PC-9 (cell line): ENCODE measurements at regions of chr17 and their contacts with region 1.

Region 1: DNA sequence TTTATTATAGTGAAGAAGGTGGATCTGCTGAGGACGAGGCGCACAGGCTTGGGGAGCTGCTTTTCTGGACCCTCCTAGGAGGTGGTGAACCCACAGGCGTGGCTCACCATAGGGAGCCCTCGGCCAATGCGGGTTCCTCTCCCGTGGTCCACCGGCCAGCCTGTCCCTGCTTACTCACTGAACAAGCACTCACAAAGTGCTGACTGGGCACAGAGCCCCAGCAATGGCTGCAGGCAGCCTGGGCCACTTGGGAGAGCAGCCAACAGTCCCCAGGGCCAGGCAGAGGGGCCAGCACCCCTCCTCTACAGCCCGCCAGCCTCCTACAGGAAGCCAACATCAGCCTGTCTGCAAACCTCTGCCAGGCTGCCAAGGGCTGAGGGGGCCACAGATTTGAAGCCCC is 19.1 kb upstream of the NCBP3 start:
- DNase-seq: no peak
- H3K4me3 ChIP-seq: no peak overlapping the region
- H3K27ac ChIP-seq: no peak overlapping the region
- H3K4me1 ChIP-seq: no peaks in the 10 kb centered on the region
- H3K27me3 ChIP-seq: no peaks in the 10 kb centered on the region
- CTCF ChIP-seq: no peak

Region 2: DNA sequence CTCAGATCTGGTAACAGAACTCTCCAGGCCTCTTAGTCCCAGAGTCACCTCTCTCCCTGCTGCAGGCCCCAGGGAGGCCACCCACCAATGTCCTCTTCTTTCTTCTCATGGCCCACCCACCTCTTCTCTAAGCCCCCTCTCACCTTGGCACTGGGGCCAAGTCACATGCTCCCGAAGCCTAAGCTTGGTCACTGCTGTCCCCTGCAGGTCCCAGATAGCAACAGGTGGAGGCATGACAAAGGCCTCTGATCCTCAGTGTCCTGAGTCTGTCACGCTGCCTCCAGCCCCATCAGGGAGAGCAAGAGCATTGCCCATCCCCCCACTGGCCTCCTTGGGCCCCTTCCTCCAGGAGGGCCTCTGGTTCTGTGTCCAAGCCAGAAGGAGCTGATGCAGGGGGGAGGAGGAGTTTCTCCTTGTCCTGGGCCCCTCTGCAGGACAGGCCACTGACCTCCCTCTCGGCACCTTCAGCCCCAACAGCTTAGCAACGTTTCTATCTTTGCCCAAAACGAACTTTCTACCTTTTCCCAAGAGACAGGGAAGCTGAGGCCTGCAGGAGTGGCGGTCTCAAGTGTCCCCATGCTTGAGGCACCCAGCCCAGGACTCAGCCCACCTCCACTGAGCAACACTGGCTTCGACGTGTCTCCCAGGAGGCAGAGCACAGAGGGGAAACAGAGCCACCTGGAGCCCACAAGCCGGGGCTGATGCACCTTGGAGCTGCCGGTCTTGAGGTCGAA is 42.5 kb after region 1 on chr17:
- CTCF ChIA-PET with region 1: no interaction called
- POLR2A ChIA-PET with region 1: no interaction called
- intact Hi-C with region 1: loop called (anchors 1 kb)
- DNase-seq: no peak
- H3K4me3 ChIP-seq: no peak overlapping the region
- H3K27ac ChIP-seq: no peak overlapping the region
- H3K4me1 ChIP-seq: no peaks in the 10 kb centered on the region
- H3K27me3 ChIP-seq: no peaks in the 10 kb centered on the region; the same call in 1 of the 2 replicates
- CTCF ChIP-seq: peak; percentile 58